Activated CD8-positive, alpha-beta memory T cell treated with anti-CD3 and anti-CD28 coated beads, Interleukin-2, amount 10 ng/mL, durations not matched to agents 7 days and 5 days (primary cell): ENCODE measurements at regions of chr4 and their contacts with region 1.

Region 1: GRCh38 chr4:98467627-98468072 is 190.8 kb downstream of the TSPAN5 start:
- DNase-seq: peak; percentile 85
- ATAC-seq: peak; percentile 91
- H3K4me3 Mint-ChIP-seq: peak overlapping the region; percentile 52
- H3K27ac Mint-ChIP-seq: no peak overlapping the region
- H3K4me1 Mint-ChIP-seq: peaks cover 32% of the 10 kb centered on the region
- H3K27me3 Mint-ChIP-seq: peaks cover 3% of the 10 kb centered on the region

Region 2: GRCh38 chr4:98341309-98341708 is 126.3 kb before region 1 on chr4:
- CTCF ChIA-PET with region 1: no interaction called
- DNase-seq: no peak
- ATAC-seq: no peak
- H3K4me3 Mint-ChIP-seq: no peak overlapping the region
- H3K27ac Mint-ChIP-seq: no peak overlapping the region
- H3K4me1 Mint-ChIP-seq: peaks cover 2% of the 10 kb centered on the region
- H3K27me3 Mint-ChIP-seq: no peaks in the 10 kb centered on the region

Region 3: GRCh38 chr4:98928505-98929340 is 461.1 kb after region 1 on chr4 and contains the start of gene EIF4E:
- CTCF ChIA-PET with region 1: interaction called, 10 read pairs
- DNase-seq: peak; percentile 99
- ATAC-seq: peak; percentile 77
- H3K4me3 Mint-ChIP-seq: peak within 1 kb of the TSS; percentile 89
- H3K27ac Mint-ChIP-seq: peak within 1 kb of the TSS; percentile 100
- H3K4me1 Mint-ChIP-seq: peaks cover 38% of the 10 kb centered on the region
- H3K27me3 Mint-ChIP-seq: no peaks in the 10 kb centered on the region
- total RNA-seq, gene EIF4E: 92.1 to 122 TPM